Activated T-helper 1 cell treated with anti-CD3 and anti-CD28 coated beads, Interleukin-12 subunit alpha, Interleukin-12 subunit beta, Interleukin-2, Interleukin-4 antibody, amounts not matched to agents 30 ng/mL and 10 ng/mL and 1 ng/mL, durations not matched to agents 14 hours and 24 hours and 36 hours (primary cell): ENCODE measurements at regions of chr2 and their contacts with region 1.

Region 1: GRCh38 chr2:172172513-172173173 is 69.9 kb upstream of the DLX2 start:
- DNase-seq: peak; percentile 50
- H3K4me3 Mint-ChIP-seq: peak overlapping the region; percentile 70
- H3K27ac Mint-ChIP-seq: no peak overlapping the region
- H3K4me1 Mint-ChIP-seq: no peaks in the 10 kb centered on the region
- H3K27me3 Mint-ChIP-seq: peaks cover 18% of the 10 kb centered on the region

Region 2: GRCh38 chr2:172226244-172227061 is 53.8 kb after region 1 on chr2:
- intact Hi-C with region 1: loop called (anchors 2 kb)
- DNase-seq: no peak
- H3K4me3 Mint-ChIP-seq: no peak overlapping the region
- H3K27ac Mint-ChIP-seq: no peak overlapping the region
- H3K4me1 Mint-ChIP-seq: peaks cover 67% of the 10 kb centered on the region
- H3K27me3 Mint-ChIP-seq: no peaks in the 10 kb centered on the region

Region 3: DNA sequence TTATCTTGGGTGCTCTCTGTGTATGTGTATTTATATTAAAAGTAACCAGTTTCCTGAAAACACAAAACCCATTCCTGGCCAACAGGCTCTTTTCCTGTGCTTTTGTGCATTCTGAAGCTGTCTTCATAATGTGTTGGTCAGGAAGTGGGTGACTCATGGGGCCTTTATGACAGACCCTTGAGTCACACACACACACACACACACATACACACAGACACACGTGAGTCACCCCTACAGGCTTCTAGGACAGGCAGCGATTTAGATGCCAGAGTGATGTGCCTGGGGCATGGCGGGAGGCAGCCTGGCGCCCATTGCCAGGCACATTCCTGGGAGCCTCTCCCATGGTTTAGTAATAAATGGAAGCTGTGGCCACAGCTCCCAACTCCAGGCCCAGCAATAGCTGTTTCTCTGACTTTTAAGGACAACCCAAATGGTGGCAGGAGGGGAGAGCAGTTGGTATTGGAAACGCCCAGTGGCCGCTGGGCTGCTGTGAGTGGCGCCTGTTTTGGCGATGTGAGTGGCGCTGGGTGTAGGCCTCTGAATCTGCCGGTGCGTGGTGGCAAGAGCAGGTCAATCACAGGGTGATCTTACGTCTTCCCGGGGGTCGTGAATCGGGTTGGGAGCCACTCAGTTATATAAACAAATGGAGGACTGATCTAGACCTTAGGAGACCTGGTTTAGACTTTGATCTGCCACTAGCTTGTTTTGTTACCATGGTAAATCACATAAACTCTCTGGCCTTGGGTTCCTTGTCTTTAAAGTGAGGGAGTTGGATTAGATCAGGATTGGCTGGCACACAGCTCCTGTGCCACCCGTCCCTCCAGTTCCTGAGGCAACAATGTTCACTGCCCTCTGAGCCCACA is 80.8 kb after region 1 on chr2:
- intact Hi-C with region 1: loop called (anchors 1 kb)
- DNase-seq: peak; percentile 53
- H3K4me3 Mint-ChIP-seq: no peak overlapping the region
- H3K27ac Mint-ChIP-seq: peak overlapping the region; percentile 62
- H3K4me1 Mint-ChIP-seq: peaks cover 49% of the 10 kb centered on the region
- H3K27me3 Mint-ChIP-seq: no peaks in the 10 kb centered on the region

Region 4: GRCh38 chr2:172710584-172711024 is 538.0 kb after region 1 on chr2:
- intact Hi-C with region 1: loop called (anchors 5 kb)
- DNase-seq: no peak
- H3K4me3 Mint-ChIP-seq: no peak overlapping the region
- H3K27ac Mint-ChIP-seq: no peak overlapping the region
- H3K4me1 Mint-ChIP-seq: no peaks in the 10 kb centered on the region
- H3K27me3 Mint-ChIP-seq: peaks cover 22% of the 10 kb centered on the region